PC-9 (cell line): ENCODE measurements at regions of chr3 and their contacts with region 1.

Region 1: DNA sequence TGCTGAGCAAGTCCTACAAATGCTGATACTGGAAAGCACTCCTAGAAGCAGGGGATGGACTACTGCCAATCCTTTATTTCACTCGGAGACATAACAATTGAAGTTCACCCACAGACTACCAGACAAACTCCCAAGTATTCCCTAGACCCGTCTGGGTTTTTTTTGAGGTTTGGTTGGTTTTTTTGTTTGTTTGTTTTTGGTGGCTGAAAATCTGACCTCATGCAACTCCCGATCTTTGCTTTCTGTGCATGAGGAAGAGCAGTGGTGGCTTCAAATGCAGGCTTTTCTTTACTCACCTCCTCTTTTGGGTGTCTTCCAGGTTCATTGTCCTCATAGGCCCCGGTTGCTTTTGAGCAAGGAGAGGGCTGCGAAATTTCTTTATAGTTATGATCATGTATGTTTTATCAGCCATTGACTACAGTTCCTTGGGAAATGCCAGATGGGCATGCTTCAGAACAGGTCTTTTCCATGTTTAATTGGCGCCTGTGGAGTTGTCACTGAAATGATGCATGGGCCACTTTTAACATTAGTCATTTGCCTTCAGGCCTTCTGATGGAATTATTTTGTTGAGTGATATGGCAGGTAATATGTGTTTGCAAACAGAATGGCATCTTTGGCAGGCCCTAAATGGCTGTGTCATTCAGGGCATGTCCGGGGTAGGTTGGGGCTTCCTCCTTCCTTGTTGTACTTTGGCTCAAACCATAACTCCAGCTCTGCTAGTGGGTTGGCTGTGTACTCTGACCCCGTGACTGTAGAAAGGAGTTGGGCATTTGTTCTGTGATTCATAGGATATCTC is 81.3 kb upstream of the ZBED2 start:
- DNase-seq: peak; percentile 92 to 100
- H3K4me3 ChIP-seq: peak overlapping the region; percentile 62
- H3K27ac ChIP-seq: peak overlapping the region; percentile 83
- H3K4me1 ChIP-seq: peaks cover 44% of the 10 kb centered on the region
- H3K27me3 ChIP-seq: no peaks in the 10 kb centered on the region
- CTCF ChIP-seq: no peak

Region 2: DNA sequence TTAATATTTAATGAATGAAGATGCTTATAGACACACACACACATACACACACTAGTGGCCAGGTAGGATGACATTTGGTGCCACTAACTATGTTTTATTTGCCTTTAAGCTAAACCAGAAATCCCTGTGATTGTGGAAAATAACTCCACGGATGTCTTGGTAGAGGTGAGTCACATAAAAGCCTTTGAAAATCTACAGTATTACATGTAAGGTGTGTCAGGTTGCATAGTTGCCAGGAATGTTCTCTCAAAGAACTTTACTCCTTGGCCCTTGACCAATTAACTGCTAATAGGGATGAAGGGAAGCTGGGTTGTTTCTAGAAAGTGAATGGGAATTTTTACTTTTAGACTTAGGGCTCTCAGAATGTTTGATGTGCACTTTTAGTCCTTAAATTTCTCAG is 91.2 kb before region 1 on chr3:
- CTCF ChIA-PET with region 1: no interaction called
- POLR2A ChIA-PET with region 1: no interaction called
- intact Hi-C with region 1: loop called (anchors 1 kb)
- DNase-seq: peak; percentile 36 to 93
- H3K4me3 ChIP-seq: no peak overlapping the region
- H3K27ac ChIP-seq: peak overlapping the region; percentile 52
- H3K4me1 ChIP-seq: peaks cover 38% of the 10 kb centered on the region
- H3K27me3 ChIP-seq: no peaks in the 10 kb centered on the region
- CTCF ChIP-seq: no peak

Region 3: DNA sequence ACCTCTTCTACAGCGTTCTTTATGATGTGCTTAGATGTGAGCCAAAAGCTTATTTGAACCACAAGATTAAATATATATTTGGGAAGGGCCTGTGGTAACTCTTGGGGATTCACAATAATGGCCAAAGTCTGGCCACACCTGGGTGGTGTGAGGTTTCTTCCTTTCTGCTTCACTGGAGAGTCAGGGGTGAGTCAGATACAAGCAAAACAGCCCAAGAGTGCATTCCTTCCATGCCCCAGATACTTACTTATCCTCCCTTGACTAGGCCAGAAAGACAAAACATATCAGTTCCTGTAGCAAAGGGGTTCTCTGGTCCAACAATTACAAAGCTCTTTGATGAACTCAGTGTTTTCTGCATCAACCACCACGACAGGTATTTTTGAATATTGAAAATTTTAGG is 82.2 kb before region 1 on chr3:
- CTCF ChIA-PET with region 1: no interaction called
- POLR2A ChIA-PET with region 1: interaction called, 8 read pairs
- intact Hi-C with region 1: loop called (anchors 2 kb)
- DNase-seq: peak; percentile 74 to 92
- H3K4me3 ChIP-seq: no peak overlapping the region
- H3K27ac ChIP-seq: peak overlapping the region; percentile 57
- H3K4me1 ChIP-seq: peaks cover 28% of the 10 kb centered on the region
- H3K27me3 ChIP-seq: no peaks in the 10 kb centered on the region
- CTCF ChIP-seq: no peak

Region 4: GRCh38 chr3:111666041-111666735 is 10.2 kb before region 1 on chr3:
- CTCF ChIA-PET with region 1: no interaction called
- POLR2A ChIA-PET with region 1: no interaction called
- intact Hi-C with region 1: no loop called
- DNase-seq: no peak
- H3K4me3 ChIP-seq: no peak overlapping the region
- H3K27ac ChIP-seq: no peak overlapping the region
- H3K4me1 ChIP-seq: peaks cover 16% of the 10 kb centered on the region
- H3K27me3 ChIP-seq: no peaks in the 10 kb centered on the region
- CTCF ChIP-seq: no peak

Region 5: GRCh38 chr3:111761309-111761831 is 85.0 kb after region 1 on chr3:
- CTCF ChIA-PET with region 1: no interaction called
- POLR2A ChIA-PET with region 1: no interaction called
- intact Hi-C with region 1: loop called (anchors 1 kb)
- DNase-seq: peak; percentile 47 to 73
- H3K4me3 ChIP-seq: no peak overlapping the region
- H3K27ac ChIP-seq: peak overlapping the region; percentile 32
- H3K4me1 ChIP-seq: peaks cover 10% of the 10 kb centered on the region
- H3K27me3 ChIP-seq: no peaks in the 10 kb centered on the region
- CTCF ChIP-seq: no peak

Region 6: DNA sequence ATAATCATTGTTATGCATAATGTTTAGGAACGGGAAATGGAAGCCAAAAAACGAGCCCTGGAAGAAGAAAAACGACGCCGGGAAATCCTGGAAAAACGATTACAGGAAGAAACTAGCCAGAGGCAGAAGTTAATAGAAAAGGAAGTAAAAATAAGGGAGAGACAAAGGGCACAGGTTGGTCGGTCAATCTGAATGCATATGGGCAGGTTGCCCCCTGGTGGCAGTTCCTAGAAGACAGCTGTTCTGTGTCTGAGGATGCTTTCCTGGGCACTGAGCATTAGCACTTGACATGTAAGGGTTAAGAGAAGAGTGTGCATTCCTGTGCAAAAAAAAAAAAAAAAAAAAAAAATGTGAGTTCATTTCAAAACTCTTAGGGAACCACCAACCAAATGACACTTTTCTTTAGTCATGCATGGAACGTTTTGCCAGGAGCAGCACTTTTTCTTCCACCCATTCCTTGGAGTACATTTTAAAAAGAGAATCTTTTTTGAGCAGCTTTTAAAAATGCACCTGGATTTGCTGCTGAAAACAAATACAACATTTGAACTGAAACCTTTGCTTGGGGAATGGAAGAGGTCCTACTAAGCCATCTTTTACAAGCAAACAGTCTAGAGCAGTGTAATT is 291.4 kb after region 1 on chr3:
- CTCF ChIA-PET with region 1: no interaction called
- POLR2A ChIA-PET with region 1: no interaction called
- intact Hi-C with region 1: no loop called
- DNase-seq: peak; percentile 71 to 85
- H3K4me3 ChIP-seq: no peak overlapping the region
- H3K27ac ChIP-seq: peak overlapping the region; percentile 54
- H3K4me1 ChIP-seq: peaks cover 25% of the 10 kb centered on the region
- H3K27me3 ChIP-seq: no peaks in the 10 kb centered on the region
- CTCF ChIP-seq: peak; percentile 99

Region 7: GRCh38 chr3:112074721-112075497 is 398.5 kb after region 1 on chr3:
- CTCF ChIA-PET with region 1: no interaction called
- POLR2A ChIA-PET with region 1: no interaction called
- intact Hi-C with region 1: loop called (anchors 2 kb)
- DNase-seq: peak; percentile 94 to 100
- H3K4me3 ChIP-seq: peak overlapping the region; percentile 35; the same call in 1 of the 2 replicates
- H3K27ac ChIP-seq: peak overlapping the region; percentile 78
- H3K4me1 ChIP-seq: peaks cover 28% of the 10 kb centered on the region
- H3K27me3 ChIP-seq: no peaks in the 10 kb centered on the region
- CTCF ChIP-seq: no peak